Tibial artery (tissue), 4 donors: ENCODE measurements at regions of chr15 and their contacts with region 1.

Region 1: GRCh38 chr15:38242055-38242454 is 10.6 kb upstream of the SPRED1 start:
- DNase-seq: no peak
- H3K4me3 ChIP-seq: no peak overlapping the region
- H3K27ac ChIP-seq: no peak overlapping the region
- H3K4me1 ChIP-seq: no peaks in the 10 kb centered on the region
- H3K27me3 ChIP-seq: no peaks in the 10 kb centered on the region
- CTCF ChIP-seq: no peak

Region 2: DNA sequence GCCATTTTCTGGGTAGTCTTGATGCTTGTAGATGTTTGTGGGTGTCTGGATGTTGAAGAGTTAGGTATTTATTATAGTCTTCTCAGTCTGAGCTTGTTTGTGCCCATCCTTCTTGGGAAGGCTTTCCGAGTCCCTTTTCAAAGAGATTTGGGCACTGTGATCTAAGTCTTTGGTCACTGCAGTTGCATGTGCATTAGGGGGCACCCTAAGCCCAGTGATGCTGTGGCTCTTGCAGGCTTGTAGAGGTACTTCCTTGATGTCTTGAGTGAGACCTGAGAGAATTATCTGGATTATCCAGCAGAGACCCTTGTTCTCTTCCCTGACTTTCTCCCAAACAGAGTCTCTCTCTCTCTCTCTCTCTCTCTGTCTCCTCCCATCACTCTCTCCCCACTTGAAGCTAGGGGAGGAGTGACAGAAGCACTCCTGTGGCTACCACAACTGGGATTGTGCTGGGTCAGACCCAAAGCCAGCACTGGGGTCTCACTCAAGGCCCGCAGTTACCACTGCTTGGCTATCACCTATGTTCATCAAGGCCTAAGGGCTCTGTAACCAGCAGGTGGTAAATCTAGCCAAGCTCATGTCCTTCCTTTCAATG is 239.1 kb before region 1 on chr15:
- intact Hi-C with region 1: loop called (anchors 10 kb)
- DNase-seq: peak; percentile 51 to 68
- H3K4me3 ChIP-seq: no peak overlapping the region
- H3K27ac ChIP-seq: no peak overlapping the region
- H3K4me1 ChIP-seq: peaks cover 0 to 8% (median 0%) of the 10 kb centered on the region in 4 donors
- H3K27me3 ChIP-seq: no peaks in the 10 kb centered on the region
- CTCF ChIP-seq: peak; percentile 28 to 41

Region 3: GRCh38 chr15:38843051-38843501 is 601.0 kb after region 1 on chr15:
- intact Hi-C with region 1: no loop called
- DNase-seq: no peak
- H3K4me3 ChIP-seq: no peak overlapping the region
- H3K27ac ChIP-seq: no peak overlapping the region
- H3K4me1 ChIP-seq: peaks cover 0 to 31% (median 19%) of the 10 kb centered on the region in 4 donors
- H3K27me3 ChIP-seq: no peaks in the 10 kb centered on the region
- CTCF ChIP-seq: no peak